MCF 10A (cell line): ENCODE measurements at regions of chr5 and their contacts with region 1.

Region 1: DNA sequence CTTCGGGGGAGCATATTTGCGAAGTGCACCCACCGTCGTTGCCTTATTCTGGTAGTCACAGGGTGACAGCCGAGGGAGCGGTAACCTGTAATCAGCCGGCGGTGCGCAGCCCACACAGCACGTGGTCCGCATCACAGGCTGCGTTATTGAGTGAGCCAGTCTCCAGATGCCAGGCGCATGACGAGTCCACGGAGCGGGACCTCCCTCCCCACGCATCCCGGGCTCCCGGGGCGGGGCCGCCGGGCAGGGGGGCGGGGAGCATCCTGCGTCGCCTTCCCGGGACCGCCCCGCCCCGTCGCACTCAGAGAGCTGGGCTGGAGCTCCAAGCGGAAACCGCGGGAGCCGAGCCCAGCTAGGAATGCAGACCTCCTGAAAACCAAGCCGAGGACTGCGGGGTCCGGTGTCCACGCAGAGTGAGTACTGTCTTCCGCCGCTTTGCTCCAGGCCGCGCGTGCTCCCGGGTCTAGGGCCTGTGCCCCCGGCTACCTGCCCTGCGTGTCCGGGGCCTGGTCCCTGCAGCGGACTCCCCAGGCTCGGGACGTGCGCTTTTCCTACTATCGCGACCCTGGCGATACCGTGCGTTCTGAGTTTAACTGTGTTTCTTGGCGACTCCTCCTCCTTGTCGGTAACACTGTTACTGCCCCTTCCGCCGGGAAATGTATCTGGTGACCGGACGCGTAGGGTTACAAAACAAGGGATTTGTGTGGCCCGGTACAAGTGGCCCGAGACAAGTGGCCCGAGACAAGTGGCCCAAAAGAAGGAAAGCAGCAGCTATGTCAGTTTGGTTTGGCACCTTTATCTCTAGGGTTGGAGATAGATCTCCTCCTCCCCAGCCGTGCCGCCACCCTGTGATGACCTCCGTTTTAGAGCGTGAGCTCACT is 40.6 kb downstream of the CAST start:
- DNase-seq: peak; percentile 91
- H3K4me3 Mint-ChIP-seq: peak overlapping the region; percentile 82
- H3K27ac Mint-ChIP-seq: peak overlapping the region; percentile 97
- H3K4me1 Mint-ChIP-seq: peaks cover 56% of the 10 kb centered on the region
- H3K27me3 Mint-ChIP-seq: no peaks in the 10 kb centered on the region
- CTCF ChIP-seq: no peak

Region 2: GRCh38 chr5:95808686-95809413 is 893.9 kb before region 1 on chr5:
- CTCF ChIA-PET with region 1: no interaction called
- POLR2A ChIA-PET with region 1: no interaction called
- intact Hi-C with region 1: no loop called
- DNase-seq: no peak
- H3K4me3 Mint-ChIP-seq: no peak overlapping the region
- H3K27ac Mint-ChIP-seq: no peak overlapping the region
- H3K4me1 Mint-ChIP-seq: peaks cover 6% of the 10 kb centered on the region
- H3K27me3 Mint-ChIP-seq: no peaks in the 10 kb centered on the region
- CTCF ChIP-seq: no peak

Region 3: DNA sequence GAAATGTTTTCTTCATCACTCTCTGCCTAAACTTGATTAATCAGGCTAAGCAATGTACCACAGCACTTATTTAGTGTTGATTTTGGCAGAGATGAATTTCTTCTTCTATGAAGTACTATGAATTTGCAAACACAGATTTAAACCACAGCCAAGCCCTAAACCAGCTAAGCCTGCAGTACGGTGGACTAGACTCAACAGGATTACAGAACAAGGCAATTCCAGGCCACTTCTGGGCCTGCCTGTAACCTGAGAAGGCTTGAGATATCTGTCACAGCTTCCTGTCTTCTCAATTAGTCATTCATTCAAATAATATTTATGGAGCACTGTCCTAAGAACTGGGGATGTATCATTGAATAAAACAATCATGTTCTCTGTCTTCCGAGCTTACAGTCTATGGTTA is 73.0 kb before region 1 on chr5:
- CTCF ChIA-PET with region 1: no interaction called
- POLR2A ChIA-PET with region 1: interaction called, 28 read pairs
- intact Hi-C with region 1: no loop called
- DNase-seq: peak; percentile 95
- H3K4me3 Mint-ChIP-seq: peak overlapping the region; percentile 3
- H3K27ac Mint-ChIP-seq: peak overlapping the region; percentile 89
- H3K4me1 Mint-ChIP-seq: peaks cover 31% of the 10 kb centered on the region
- H3K27me3 Mint-ChIP-seq: no peaks in the 10 kb centered on the region
- CTCF ChIP-seq: no peak

Region 4: GRCh38 chr5:96657087-96657665 is 45.6 kb before region 1 on chr5:
- CTCF ChIA-PET with region 1: interaction called, 8 read pairs
- POLR2A ChIA-PET with region 1: interaction called, 169 read pairs
- intact Hi-C with region 1: loop called (anchors 5 kb)
- DNase-seq: peak; percentile 92
- H3K4me3 Mint-ChIP-seq: peak overlapping the region; percentile 2
- H3K27ac Mint-ChIP-seq: peak overlapping the region; percentile 69
- H3K4me1 Mint-ChIP-seq: peaks cover 42% of the 10 kb centered on the region
- H3K27me3 Mint-ChIP-seq: no peaks in the 10 kb centered on the region
- CTCF ChIP-seq: no peak

Region 5: DNA sequence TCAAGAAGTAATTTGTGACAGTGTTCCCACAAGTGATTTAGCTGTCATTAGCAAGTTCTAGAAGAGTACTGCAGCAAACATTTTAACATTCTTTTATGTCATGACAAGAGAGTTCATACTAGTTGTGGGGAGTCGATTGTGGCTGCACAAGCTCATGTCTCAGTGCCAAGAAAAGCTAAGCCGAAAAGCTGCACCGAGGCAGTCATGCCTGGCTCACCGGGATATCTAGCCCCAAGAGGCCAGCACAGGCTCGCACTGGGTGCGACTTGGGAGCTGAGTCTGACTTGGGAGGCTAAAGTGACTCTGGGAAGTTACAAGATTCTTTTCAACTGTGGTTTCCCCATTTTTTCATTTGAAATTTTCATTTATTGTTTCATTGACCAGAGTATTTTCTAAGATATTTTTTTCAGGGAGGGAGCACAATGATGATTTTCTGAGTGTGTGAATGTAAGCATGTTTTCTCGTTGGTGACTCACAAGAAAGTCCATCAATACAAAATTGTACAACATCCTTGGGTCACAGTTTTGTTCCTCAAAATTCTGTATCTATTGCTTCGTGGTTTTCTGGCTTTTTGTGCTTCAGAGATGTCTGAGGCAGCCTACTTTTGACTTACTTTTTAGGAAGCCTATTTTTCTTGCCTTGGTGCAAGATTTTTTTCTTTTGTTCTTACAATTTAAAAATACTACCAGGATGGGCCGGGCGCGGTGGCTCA is 21.8 kb before region 1 on chr5:
- CTCF ChIA-PET with region 1: interaction called, 5 read pairs
- POLR2A ChIA-PET with region 1: interaction called, 11 read pairs
- intact Hi-C with region 1: no loop called
- DNase-seq: peak; percentile 43
- H3K4me3 Mint-ChIP-seq: no peak overlapping the region
- H3K27ac Mint-ChIP-seq: no peak overlapping the region
- H3K4me1 Mint-ChIP-seq: peaks cover 14% of the 10 kb centered on the region
- H3K27me3 Mint-ChIP-seq: no peaks in the 10 kb centered on the region
- CTCF ChIP-seq: no peak

Region 6: DNA sequence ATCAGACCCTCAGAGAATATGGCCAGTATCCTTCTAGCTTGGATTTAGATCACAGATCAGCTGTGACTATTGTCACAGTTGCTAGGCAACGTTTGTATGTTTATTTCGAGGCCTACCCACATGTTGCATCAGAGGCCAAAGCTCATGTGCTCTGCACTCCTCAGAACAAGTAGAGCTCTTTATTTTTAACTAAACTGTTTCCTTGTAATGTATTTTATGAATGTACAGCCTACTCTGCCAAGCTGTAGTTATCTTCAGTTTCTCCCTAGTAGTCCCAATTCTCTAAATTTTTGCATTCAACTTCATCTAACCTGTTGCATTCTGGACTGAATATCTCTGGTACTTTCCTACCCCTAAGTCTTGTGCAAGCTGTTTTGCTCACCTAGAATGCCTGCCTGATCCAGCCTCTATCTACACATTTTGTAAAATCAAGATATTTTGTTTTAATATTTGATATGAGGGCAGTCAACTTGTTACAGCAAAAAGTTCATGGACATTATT is 12.3 kb after region 1 on chr5:
- CTCF ChIA-PET with region 1: interaction called, 7 read pairs
- POLR2A ChIA-PET with region 1: interaction called, 177 read pairs
- intact Hi-C with region 1: loop called (anchors 1 kb)
- DNase-seq: peak; percentile 74
- H3K4me3 Mint-ChIP-seq: no peak overlapping the region
- H3K27ac Mint-ChIP-seq: peak overlapping the region; percentile 93
- H3K4me1 Mint-ChIP-seq: peaks cover 43% of the 10 kb centered on the region
- H3K27me3 Mint-ChIP-seq: no peaks in the 10 kb centered on the region
- CTCF ChIP-seq: no peak